ENCODE measurements at regions of chr19 and their contacts with region 1.

Region 1: GRCh38 chr19:13872695-13873389 is 4.1 kb upstream of the NANOS3 start:
- DNase-seq: peak in 1 of 2 donors; percentile 66
- ATAC-seq: peak; percentile 77

Region 2: DNA sequence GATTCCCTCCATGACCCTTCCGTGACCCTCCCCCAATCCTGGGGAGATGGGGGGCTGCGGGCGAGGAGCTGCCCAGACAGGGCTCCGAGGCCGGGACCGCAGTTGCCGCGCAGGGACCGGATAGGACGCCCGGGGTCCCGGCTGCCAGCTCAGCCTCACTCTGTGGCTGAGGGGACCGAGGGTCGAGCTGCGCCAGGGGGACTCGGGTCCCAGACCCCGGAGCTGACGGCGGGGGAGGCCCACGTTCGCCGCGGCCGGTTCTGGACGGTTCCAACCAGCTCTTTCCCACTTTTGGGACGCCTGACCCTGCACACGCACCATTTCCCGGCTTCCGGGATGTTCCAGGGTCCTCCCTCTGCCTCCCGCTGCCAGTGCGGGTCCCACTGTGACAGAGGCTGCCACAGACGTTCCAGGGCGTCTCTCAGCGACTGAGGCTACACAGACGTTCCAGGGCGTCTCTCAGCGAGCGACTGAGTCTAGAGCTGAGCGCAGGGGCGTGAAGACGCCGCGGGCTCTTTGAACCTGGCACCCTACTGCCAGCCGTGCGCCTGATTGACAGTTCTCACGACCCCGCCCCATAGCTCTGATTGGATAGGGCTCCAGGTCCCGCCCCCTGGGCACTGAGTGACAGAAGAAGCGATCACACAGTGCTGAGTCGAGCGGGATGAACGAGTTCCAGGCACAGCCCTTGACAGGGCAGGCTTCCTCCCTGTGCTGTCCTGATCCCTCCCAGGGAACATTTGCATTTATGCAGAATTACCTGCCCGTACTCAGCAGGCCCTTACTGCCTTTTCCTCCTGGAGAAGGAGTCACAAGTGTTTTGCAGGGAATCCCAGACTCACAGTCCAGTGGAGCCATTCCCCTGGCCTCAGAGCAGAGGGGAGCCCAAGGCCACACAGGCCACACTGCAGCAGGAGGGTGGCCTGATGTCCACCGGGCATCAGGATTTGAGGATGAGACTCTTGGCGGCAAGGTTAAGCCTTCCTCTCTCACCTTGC is 1539.4 kb before region 1 on chr19 and contains the start of gene ZNF563:
- intact Hi-C with region 1: no loop called
- DNase-seq: peak; percentile 99 to 100
- ATAC-seq: peak; percentile 94
- total RNA-seq, gene ZNF563: 2.6 to 4.3 TPM

Region 3: DNA sequence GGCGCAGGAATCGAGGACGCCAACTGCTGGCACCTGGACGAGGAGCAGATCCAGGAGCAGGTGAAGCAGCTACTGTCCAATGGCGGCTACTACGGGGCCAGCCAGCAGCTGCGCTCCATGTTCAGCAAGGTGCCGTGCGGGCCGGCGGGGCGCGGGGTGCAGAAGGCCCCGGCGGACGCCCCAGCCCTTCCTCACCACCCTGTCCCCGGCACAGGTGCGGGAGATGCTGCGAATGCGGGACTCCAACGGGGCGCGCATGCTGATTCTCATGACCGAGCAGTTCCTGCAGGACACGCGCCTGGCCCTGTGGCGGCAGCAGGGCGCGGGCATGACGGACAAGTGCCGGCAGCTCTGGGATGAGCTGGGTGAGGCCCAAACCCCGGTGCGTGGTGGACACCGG is 64.0 kb before region 1 on chr19:
- intact Hi-C with region 1: no loop called
- DNase-seq: no peak
- ATAC-seq: no peak

Region 4: DNA sequence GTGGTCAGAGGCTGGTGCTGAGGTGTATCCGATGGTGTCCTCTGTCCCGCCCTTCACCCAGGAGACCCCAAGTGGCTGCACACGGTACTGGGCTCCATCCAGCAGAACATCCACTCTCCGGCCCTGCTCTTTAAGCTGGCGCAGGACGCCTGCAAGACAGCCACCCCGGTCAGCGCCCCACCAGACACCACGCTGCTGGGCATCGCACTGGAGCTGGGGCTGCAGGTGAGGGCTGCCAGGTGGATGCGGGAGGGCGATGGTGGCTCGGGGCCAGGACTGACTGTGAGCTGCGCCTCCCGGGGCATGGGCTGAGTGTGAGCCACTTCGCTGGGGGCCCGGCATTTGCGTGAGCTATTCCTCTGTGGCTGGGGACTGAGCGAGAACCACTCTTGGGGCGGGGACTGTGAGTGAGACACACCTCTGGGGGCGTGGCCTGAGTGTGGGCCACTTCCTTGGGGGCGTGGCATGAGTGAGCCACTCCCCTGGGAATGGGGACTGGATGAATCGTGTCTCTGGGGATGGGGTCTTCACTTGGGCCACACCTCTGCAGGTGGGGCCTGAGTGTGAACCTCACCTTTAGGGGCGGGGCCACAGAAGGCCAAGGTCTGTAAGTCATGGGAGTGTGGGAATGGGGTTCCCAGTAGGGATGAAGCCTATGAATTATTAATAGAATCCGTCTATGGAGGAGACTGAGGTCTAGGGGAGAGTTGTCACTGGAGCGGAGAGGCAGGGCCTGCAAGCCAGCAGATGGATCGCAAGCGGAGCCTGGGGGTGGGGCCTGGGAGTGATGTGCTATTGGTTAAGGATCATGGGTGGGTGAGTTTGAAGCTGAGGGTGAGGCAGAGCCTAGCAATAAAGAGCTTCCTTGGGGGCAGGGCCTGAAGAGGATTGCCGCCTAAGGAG is 47.1 kb before region 1 on chr19:
- intact Hi-C with region 1: no loop called
- DNase-seq: peak in 1 of 2 donors; percentile 52
- ATAC-seq: peak; percentile 69

Region 5: DNA sequence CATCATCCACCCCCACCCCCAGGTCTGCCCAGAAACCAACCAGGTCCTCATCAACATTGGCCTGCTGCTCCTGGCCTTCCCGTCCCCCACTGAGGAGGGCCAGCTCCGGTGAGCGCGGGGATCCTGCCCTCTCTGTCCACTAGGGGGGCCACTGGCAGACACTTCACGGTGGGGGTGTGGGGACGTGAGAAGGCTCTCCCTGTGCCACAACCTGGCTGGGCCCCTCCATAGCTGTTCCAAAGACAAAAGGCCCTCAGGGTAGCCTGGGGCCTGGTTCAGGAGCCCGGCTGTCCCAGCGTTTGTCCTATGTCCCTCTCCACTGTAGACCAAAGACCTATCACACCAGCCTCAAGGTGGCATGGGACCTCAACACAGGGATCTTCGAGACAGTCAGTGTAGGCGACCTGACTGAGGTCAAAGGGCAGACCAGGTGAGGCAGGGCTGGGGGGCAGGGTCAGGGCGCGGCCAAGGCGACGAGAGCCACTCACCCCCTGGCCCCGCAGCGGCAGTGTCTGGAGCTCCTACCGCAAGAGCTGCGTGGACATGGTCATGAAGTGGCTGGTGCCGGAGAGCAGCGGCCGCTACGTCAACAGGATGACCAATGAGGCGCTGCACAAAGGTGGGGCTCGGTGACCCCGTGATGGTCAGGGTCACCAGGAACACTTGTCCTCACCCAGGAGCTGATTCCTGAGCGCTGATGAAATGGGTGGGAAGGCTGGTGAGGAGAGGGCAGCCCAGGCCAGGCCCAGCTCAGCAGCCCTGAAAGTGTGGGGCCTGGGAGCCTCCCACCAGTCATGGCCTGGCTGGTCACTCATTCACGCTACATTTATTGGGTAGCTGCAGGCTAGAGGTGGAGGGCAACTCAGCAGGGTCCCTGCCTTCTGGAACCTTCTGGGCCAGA is 87.4 kb after region 1 on chr19:
- intact Hi-C with region 1: no loop called
- DNase-seq: no peak
- ATAC-seq: peak; percentile 27

Region 6: GRCh38 chr19:14073261-14073924 is 200.6 kb after region 1 on chr19:
- intact Hi-C with region 1: loop called in 1 of 2 experiments (anchors 10 kb)
- DNase-seq: peak in 1 of 2 donors; percentile 85
- ATAC-seq: peak; percentile 28

Measured in left colon (tissue), 2 donors.